CD4-positive, alpha-beta T cell (primary cell): ENCODE measurements at regions of chr1 and their contacts with region 1.

Region 1: GRCh38 chr1:174262349-174263241 is 103.3 kb downstream of the RABGAP1L start:
- DNase-seq: peak in 3 of 14 experiments; percentile 29 to 38 (median 35)
- ATAC-seq: no peak
- H3K4me3 ChIP-seq: no peak overlapping the region
- H3K4me3 Mint-ChIP-seq: no peak overlapping the region
- H3K27ac ChIP-seq: no peak overlapping the region
- H3K27ac Mint-ChIP-seq: no peak overlapping the region
- H3K4me1 ChIP-seq: no peaks in the 10 kb centered on the region
- H3K4me1 Mint-ChIP-seq: no peaks in the 10 kb centered on the region
- H3K27me3 ChIP-seq: no peaks in the 10 kb centered on the region
- H3K27me3 Mint-ChIP-seq: no peaks in the 10 kb centered on the region
- CTCF ChIP-seq: peak; percentile 30

Region 2: GRCh38 chr1:174217787-174218574 is 44.6 kb before region 1 on chr1:
- CTCF ChIA-PET with region 1: no interaction called
- POLR2A ChIA-PET with region 1: no interaction called
- intact Hi-C with region 1: no loop called
- DNase-seq: peak in 3 of 14 experiments; percentile 55 to 66 (median 65)
- ATAC-seq: peak; percentile 79
- H3K4me3 ChIP-seq: no peak overlapping the region
- H3K4me3 Mint-ChIP-seq: no peak overlapping the region
- H3K27ac ChIP-seq: no peak overlapping the region
- H3K27ac Mint-ChIP-seq: no peak overlapping the region
- H3K4me1 ChIP-seq: no peaks in the 10 kb centered on the region
- H3K4me1 Mint-ChIP-seq: no peaks in the 10 kb centered on the region
- H3K27me3 ChIP-seq: no peaks in the 10 kb centered on the region
- H3K27me3 Mint-ChIP-seq: no peaks in the 10 kb centered on the region
- CTCF ChIP-seq: peak; percentile 88

Region 3: DNA sequence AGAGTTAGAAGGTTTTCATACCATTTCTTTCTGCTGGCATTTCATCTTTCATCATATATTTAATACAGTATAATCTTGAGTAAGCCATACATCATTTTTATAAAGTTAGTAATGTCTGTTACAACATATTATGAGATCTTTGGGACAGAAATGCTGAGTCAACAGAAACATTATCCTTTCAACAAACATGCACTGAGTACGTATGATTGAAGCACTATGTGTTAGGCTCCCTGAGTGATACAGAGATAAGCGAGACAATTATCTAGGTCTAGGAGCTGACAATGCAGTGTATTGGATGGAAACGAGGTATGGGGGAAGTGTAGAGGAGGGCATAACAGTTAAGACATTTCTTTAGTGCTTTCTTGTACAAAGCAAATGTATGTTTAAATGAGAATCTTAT is 165.4 kb after region 1 on chr1:
- CTCF ChIA-PET with region 1: no interaction called
- POLR2A ChIA-PET with region 1: no interaction called
- intact Hi-C with region 1: no loop called
- DNase-seq: no peak
- ATAC-seq: no peak
- H3K4me3 ChIP-seq: no peak overlapping the region
- H3K4me3 Mint-ChIP-seq: no peak overlapping the region
- H3K27ac ChIP-seq: no peak overlapping the region
- H3K27ac Mint-ChIP-seq: no peak overlapping the region
- H3K4me1 ChIP-seq: no peaks in the 10 kb centered on the region
- H3K4me1 Mint-ChIP-seq: no peaks in the 10 kb centered on the region
- H3K27me3 ChIP-seq: no peaks in the 10 kb centered on the region
- H3K27me3 Mint-ChIP-seq: no peaks in the 10 kb centered on the region
- CTCF ChIP-seq: no peak

Region 4: DNA sequence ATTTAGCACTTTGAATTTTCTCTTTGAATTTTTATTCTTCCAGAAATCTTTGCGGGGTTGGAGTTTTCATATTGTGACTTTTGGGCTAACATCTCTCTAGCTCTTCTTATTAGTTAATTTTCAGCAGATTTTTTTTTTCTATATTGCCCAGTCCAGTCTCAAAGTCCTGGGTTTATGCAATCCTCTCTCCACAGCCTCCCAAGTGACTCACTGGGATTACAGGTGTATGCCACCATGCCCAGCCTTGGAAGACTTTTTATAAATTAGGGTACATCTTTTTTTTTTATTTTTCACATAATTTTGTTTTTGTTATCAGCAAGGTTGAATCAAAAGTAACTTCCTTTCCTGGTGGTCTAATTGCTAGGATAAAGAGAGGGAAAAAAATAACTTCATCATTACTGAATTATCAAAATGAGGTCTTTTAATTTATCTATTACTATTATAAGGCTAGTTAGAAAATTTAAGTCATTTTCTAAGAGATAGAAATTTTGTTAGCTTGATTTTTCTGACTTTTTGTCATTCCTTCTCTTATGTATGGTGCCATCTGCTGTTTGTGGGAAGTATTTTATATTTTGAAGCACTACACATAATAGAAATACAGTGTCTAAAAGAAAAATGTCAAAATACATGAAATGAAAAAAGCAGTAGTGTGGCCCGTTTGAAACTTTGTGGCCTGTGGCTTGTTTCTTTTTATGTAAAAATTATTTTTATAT is 463.7 kb after region 1 on chr1:
- CTCF ChIA-PET with region 1: interaction called, 4 read pairs
- POLR2A ChIA-PET with region 1: no interaction called
- intact Hi-C with region 1: loop called in 1 of 2 experiments (anchors 1 kb)
- DNase-seq: peak in 2 of 14 experiments; percentile 17 to 18
- ATAC-seq: no peak
- H3K4me3 ChIP-seq: no peak overlapping the region
- H3K4me3 Mint-ChIP-seq: no peak overlapping the region
- H3K27ac ChIP-seq: no peak overlapping the region
- H3K27ac Mint-ChIP-seq: no peak overlapping the region
- H3K4me1 ChIP-seq: no peaks in the 10 kb centered on the region
- H3K4me1 Mint-ChIP-seq: no peaks in the 10 kb centered on the region
- H3K27me3 ChIP-seq: no peaks in the 10 kb centered on the region
- H3K27me3 Mint-ChIP-seq: no peaks in the 10 kb centered on the region
- CTCF ChIP-seq: peak; percentile 59

Region 5: GRCh38 chr1:174743654-174744561 is 481.3 kb after region 1 on chr1:
- CTCF ChIA-PET with region 1: interaction called, 3 read pairs
- POLR2A ChIA-PET with region 1: no interaction called
- intact Hi-C with region 1: loop called (anchors 1 to 2 kb)
- DNase-seq: peak in 3 of 14 experiments; percentile 56 to 72 (median 71)
- ATAC-seq: peak; percentile 44
- H3K4me3 ChIP-seq: no peak overlapping the region
- H3K4me3 Mint-ChIP-seq: no peak overlapping the region
- H3K27ac ChIP-seq: no peak overlapping the region
- H3K27ac Mint-ChIP-seq: no peak overlapping the region
- H3K4me1 ChIP-seq: peaks cover 3% of the 10 kb centered on the region
- H3K4me1 Mint-ChIP-seq: peaks cover 9% of the 10 kb centered on the region
- H3K27me3 ChIP-seq: no peaks in the 10 kb centered on the region
- H3K27me3 Mint-ChIP-seq: no peaks in the 10 kb centered on the region
- CTCF ChIP-seq: peak; percentile 87

Region 6: GRCh38 chr1:175129997-175130648 is 867.5 kb after region 1 on chr1:
- CTCF ChIA-PET with region 1: no interaction called
- POLR2A ChIA-PET with region 1: no interaction called
- intact Hi-C with region 1: loop called in 1 of 2 experiments (anchors 10 kb)
- DNase-seq: no peak
- ATAC-seq: no peak
- H3K4me3 ChIP-seq: no peak overlapping the region
- H3K4me3 Mint-ChIP-seq: no peak overlapping the region
- H3K27ac ChIP-seq: no peak overlapping the region
- H3K27ac Mint-ChIP-seq: no peak overlapping the region
- H3K4me1 ChIP-seq: peaks cover 2% of the 10 kb centered on the region
- H3K4me1 Mint-ChIP-seq: no peaks in the 10 kb centered on the region
- H3K27me3 ChIP-seq: peaks cover 0 to 2% of the 10 kb centered on the region in 2 experiments
- H3K27me3 Mint-ChIP-seq: peaks cover 11% of the 10 kb centered on the region
- CTCF ChIP-seq: no peak